CD14-positive monocyte (primary cell): ENCODE measurements at regions of chr17 and their contacts with region 1.

Region 1: DNA sequence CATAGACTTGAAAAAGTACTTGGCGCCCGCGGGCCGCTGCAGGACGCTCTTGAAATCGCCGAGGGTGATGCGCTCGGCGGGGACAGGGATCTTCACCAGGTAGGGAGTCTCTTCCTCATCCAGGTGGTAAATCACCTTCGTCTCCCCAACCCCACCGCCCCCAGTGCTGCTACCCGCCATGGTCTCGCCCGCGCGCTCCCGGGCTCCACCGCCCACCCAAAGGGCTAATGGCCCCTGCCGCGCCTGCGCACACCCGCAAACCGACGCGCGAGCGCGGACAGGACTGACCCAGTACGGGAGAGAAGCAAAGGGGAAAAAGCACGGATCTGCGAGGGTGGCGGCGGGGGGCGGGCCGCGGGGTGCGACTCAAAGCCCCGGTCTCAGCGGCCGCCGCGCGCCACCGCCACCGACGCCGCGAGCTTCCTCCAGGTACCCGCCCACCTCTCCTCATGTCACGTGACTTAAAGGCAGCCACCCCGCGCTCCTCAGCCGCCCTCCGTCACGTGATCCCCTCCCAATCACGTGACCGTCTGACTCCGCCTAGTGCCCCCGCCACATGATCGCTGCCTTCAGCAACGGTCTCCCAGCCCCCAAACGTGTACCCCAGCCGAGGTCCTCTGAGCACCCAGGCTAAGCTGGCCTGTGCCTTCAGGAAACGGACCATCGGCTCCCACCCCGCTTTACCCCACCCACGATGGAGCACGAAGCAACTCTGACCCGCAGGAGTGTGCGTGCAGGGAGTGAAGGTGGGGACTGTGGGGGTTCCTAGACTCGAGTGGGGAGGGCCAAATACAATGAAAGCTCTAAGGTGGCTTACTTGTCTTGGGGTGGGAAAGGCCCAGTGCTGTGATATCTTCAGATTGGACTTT is at the start of gene DVL2:
- DNase-seq: peak; percentile 92 to 93 (median 93)
- H3K4me3 ChIP-seq: peak within 1 kb of the TSS; percentile 81 to 90 (median 86)
- H3K4me3 Mint-ChIP-seq: peak within 1 kb of the TSS; percentile 90 to 94
- H3K27ac ChIP-seq: peak within 1 kb of the TSS; percentile 50 to 76
- H3K27ac Mint-ChIP-seq: peak within 1 kb of the TSS; percentile 76 to 92 (median 86)
- H3K4me1 ChIP-seq: peaks cover 50 to 60% of the 10 kb centered on the region in 2 donors
- H3K4me1 Mint-ChIP-seq: peaks cover 54% of the 10 kb centered on the region
- H3K27me3 ChIP-seq: no peaks in the 10 kb centered on the region
- H3K27me3 Mint-ChIP-seq: peaks cover 0 to 2% (median 0%) of the 10 kb centered on the region in 3 donors
- CTCF ChIP-seq: no peak
- polyA plus RNA-seq, gene DVL2: 6.7 to 7.8 (median 7.0) TPM

Region 2: GRCh38 chr17:7191571-7192270 is 42.6 kb before region 1 on chr17:
- intact Hi-C with region 1: no loop called
- DNase-seq: no peak
- H3K4me3 ChIP-seq: no peak overlapping the region
- H3K4me3 Mint-ChIP-seq: no peak overlapping the region
- H3K27ac ChIP-seq: no peak overlapping the region
- H3K27ac Mint-ChIP-seq: peak overlapping the region in 3 of 7 donors; percentile 52 to 71 (median 63)
- H3K4me1 ChIP-seq: no peaks in the 10 kb centered on the region
- H3K4me1 Mint-ChIP-seq: peaks cover 2% of the 10 kb centered on the region
- H3K27me3 ChIP-seq: no peaks in the 10 kb centered on the region
- H3K27me3 Mint-ChIP-seq: no peaks in the 10 kb centered on the region
- CTCF ChIP-seq: no peak

Region 3: GRCh38 chr17:7214300-7215135 is 19.8 kb before region 1 on chr17:
- intact Hi-C with region 1: loop called in 1 of 2 experiments (anchors 2 kb)
- DNase-seq: peak; percentile 91 to 96 (median 92)
- H3K4me3 ChIP-seq: peak overlapping the region; percentile 46 to 83 (median 62)
- H3K4me3 Mint-ChIP-seq: peak overlapping the region; percentile 89 to 90
- H3K27ac ChIP-seq: peak overlapping the region; percentile 69 to 71
- H3K27ac Mint-ChIP-seq: peak overlapping the region; percentile 91 to 100 (median 99)
- H3K4me1 ChIP-seq: peaks cover 56 to 59% of the 10 kb centered on the region in 2 donors
- H3K4me1 Mint-ChIP-seq: peaks cover 66% of the 10 kb centered on the region
- H3K27me3 ChIP-seq: no peaks in the 10 kb centered on the region
- H3K27me3 Mint-ChIP-seq: peaks cover 1 to 11% (median 3%) of the 10 kb centered on the region in 3 donors
- CTCF ChIP-seq: peak; percentile 50

Region 4: DNA sequence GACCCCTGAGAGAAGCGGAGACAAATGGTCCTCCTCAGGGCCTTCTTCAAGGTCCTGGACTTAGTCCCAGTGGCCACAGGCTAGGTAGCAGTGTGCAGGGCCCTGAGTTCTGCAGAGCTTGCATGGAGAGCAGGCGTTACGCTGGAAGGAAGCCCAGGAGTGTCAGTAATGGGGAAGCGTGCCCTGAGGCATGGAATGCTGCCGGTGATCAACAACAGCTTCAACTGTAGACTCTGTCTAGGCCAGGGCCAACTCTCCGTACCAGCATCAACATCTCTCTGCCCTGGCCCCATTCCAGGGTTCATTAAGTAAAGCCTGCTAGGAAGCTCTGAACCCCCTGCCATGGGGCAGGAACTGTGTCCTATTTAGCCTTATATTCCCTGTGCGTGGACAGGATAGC is 146.0 kb after region 1 on chr17:
- intact Hi-C with region 1: no loop called
- DNase-seq: no peak
- H3K4me3 ChIP-seq: peak overlapping the region in 1 of 3 experiments; percentile 7
- H3K4me3 Mint-ChIP-seq: peak overlapping the region; percentile 10 to 83
- H3K27ac ChIP-seq: no peak overlapping the region
- H3K27ac Mint-ChIP-seq: peak overlapping the region in 1 of 7 donors; percentile 57
- H3K4me1 ChIP-seq: peaks cover 16 to 23% of the 10 kb centered on the region in 2 donors
- H3K4me1 Mint-ChIP-seq: peaks cover 18% of the 10 kb centered on the region
- H3K27me3 ChIP-seq: peaks cover 34 to 59% of the 10 kb centered on the region in 2 donors
- H3K27me3 Mint-ChIP-seq: peaks cover 51 to 78% (median 65%) of the 10 kb centered on the region in 3 donors
- CTCF ChIP-seq: no peak